Naive thymus-derived CD4-positive, alpha-beta T cell (primary cell): ENCODE measurements at regions of chr19 and their contacts with region 1.

Region 1: GRCh38 chr19:10251792-10252694 is at the start of gene MRPL4:
- DNase-seq: peak; percentile 82 to 98 (median 96)
- ATAC-seq: peak; percentile 98
- H3K4me3 ChIP-seq: peak within 1 kb of the TSS; percentile 90
- H3K4me3 Mint-ChIP-seq: peak within 1 kb of the TSS; percentile 93 to 100 (median 98)
- H3K27ac ChIP-seq: peak within 1 kb of the TSS; percentile 78
- H3K27ac Mint-ChIP-seq: peak within 1 kb of the TSS; percentile 92 to 99 (median 97)
- H3K4me1 ChIP-seq: peaks cover 6 to 12% of the 10 kb centered on the region in 2 donors
- H3K4me1 Mint-ChIP-seq: peaks cover 6 to 33% (median 24%) of the 10 kb centered on the region in 7 donors
- H3K27me3 ChIP-seq: no peaks in the 10 kb centered on the region
- H3K27me3 Mint-ChIP-seq: no peaks in the 10 kb centered on the region
- total RNA-seq, gene MRPL4: 36.8 to 70.5 (median 43.0) TPM

Region 2: GRCh38 chr19:9934132-9934950 is 317.7 kb before region 1 on chr19:
- CTCF ChIA-PET with region 1: interaction called, 5 read pairs
- POLR2A ChIA-PET with region 1: no interaction called
- intact Hi-C with region 1: loop called (anchors 1 to 2 kb)
- DNase-seq: peak; percentile 60 to 88 (median 73)
- ATAC-seq: peak; percentile 97
- H3K4me3 ChIP-seq: no peak overlapping the region
- H3K4me3 Mint-ChIP-seq: peak overlapping the region in 7 of 10 donors; percentile 28 to 84 (median 39)
- H3K27ac ChIP-seq: no peak overlapping the region
- H3K27ac Mint-ChIP-seq: peak overlapping the region in 1 of 9 donors; percentile 53
- H3K4me1 ChIP-seq: peaks cover 4 to 18% of the 10 kb centered on the region in 2 donors
- H3K4me1 Mint-ChIP-seq: peaks cover 17 to 33% (median 26%) of the 10 kb centered on the region in 7 donors
- H3K27me3 ChIP-seq: peaks cover 12 to 13% of the 10 kb centered on the region in 2 donors
- H3K27me3 Mint-ChIP-seq: peaks cover 45 to 67% (median 55%) of the 10 kb centered on the region in 5 donors

Region 3: DNA sequence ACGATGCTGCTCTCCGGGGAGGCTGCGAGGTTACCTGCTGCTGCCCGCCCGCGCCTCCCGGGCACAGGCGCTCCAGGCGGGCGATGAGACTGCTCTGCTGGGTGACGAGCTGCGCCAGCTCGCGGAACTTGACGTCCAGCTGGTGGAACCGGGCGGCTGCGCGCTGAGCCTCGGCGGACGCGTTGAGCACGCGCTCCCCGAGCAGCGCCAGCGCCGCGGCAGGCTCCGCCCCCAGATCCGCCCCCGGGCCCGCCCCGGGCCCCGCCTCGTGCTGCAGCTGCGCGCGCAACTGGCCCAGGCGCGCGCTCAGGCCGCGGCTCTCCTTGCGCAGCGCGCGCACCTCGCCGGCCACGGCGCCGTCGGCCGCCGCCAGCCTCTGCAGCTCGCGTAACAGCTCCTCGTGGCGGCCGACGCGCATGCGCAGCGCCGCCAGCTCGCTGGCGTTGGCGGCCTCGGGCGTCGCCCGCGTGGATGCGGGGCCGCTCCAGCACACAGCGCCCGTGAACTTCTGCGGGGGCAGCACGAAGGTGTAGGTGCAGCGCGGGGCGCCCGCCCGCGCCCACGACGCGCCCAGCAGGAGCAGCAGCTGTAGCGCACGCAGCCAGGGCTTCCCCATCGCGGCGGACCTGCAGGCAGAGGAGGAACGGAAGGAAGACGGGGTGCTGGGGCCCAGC is 156.0 kb before region 1 on chr19:
- CTCF ChIA-PET with region 1: interaction called, 4 read pairs
- POLR2A ChIA-PET with region 1: interaction called, 6 read pairs
- intact Hi-C with region 1: loop called in 1 of 2 experiments (anchors 1 kb)
- DNase-seq: peak; percentile 86 to 98 (median 92)
- ATAC-seq: peak; percentile 95
- H3K4me3 ChIP-seq: peak overlapping the region; percentile 48
- H3K4me3 Mint-ChIP-seq: peak overlapping the region; percentile 27 to 73 (median 60)
- H3K27ac ChIP-seq: peak overlapping the region; percentile 77
- H3K27ac Mint-ChIP-seq: peak overlapping the region in 8 of 9 donors; percentile 41 to 92 (median 74)
- H3K4me1 ChIP-seq: peaks cover 21 to 22% of the 10 kb centered on the region in 2 donors
- H3K4me1 Mint-ChIP-seq: peaks cover 0 to 35% (median 25%) of the 10 kb centered on the region in 7 donors
- H3K27me3 ChIP-seq: no peaks in the 10 kb centered on the region
- H3K27me3 Mint-ChIP-seq: no peaks in the 10 kb centered on the region

Region 4: DNA sequence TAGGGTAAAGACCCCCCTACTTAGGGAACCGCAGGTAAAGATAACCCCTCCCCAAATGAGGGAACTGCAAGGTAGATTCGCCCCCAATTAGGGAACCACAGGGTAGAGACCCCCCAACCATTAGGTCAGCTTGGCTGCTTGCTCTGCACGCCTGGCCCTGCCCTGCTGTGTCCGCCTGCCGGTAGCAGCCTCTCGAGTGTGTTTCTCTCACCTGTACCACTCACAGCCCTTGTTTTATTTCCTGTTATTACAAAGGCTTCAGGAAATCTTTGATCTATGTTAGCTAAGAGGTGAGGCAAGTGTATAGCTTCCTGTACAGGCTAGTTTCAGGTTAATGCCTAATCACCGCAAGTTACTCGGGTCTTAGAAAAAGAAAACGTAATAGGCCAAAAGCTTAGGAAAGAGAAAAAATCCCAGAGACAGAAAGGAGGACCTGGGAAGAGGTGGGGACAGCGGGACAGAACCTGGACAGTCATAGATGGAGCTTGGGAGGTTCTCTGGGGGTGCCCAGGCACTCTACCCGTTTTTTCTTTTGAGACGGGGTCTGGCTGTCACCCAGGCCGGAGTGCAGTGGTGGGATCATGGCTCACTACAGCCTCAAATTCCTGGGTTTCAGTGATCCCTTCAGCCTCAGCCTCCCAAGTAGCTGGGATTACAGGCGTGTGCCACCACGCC is 109.2 kb before region 1 on chr19:
- CTCF ChIA-PET with region 1: interaction called, 4 read pairs
- POLR2A ChIA-PET with region 1: no interaction called
- intact Hi-C with region 1: loop called in 1 of 2 experiments (anchors 1 kb)
- DNase-seq: peak in 7 of 9 donors; percentile 47 to 77 (median 67)
- ATAC-seq: peak; percentile 95
- H3K4me3 ChIP-seq: peak overlapping the region; percentile 16
- H3K4me3 Mint-ChIP-seq: peak overlapping the region; percentile 78 to 94 (median 86)
- H3K27ac ChIP-seq: peak overlapping the region; percentile 82
- H3K27ac Mint-ChIP-seq: peak overlapping the region; percentile 96 to 100 (median 99)
- H3K4me1 ChIP-seq: peaks cover 41 to 49% of the 10 kb centered on the region in 2 donors
- H3K4me1 Mint-ChIP-seq: peaks cover 5 to 58% (median 42%) of the 10 kb centered on the region in 7 donors
- H3K27me3 ChIP-seq: no peaks in the 10 kb centered on the region
- H3K27me3 Mint-ChIP-seq: no peaks in the 10 kb centered on the region

Region 5: GRCh38 chr19:10230861-10231611 is 21.0 kb before region 1 on chr19 and contains the start of gene S1PR2:
- CTCF ChIA-PET with region 1: interaction called, 52 read pairs
- POLR2A ChIA-PET with region 1: interaction called, 10 read pairs
- intact Hi-C with region 1: loop called (anchors 1 kb)
- DNase-seq: peak; percentile 47 to 79 (median 56)
- ATAC-seq: peak; percentile 60
- H3K4me3 ChIP-seq: peak within 1 kb of the TSS; percentile 81
- H3K4me3 Mint-ChIP-seq: peak within 1 kb of the TSS; percentile 79 to 94 (median 88)
- H3K27ac ChIP-seq: peak within 1 kb of the TSS; percentile 94
- H3K27ac Mint-ChIP-seq: peak within 1 kb of the TSS; percentile 80 to 89 (median 83)
- H3K4me1 ChIP-seq: peaks cover 16 to 17% of the 10 kb centered on the region in 2 donors
- H3K4me1 Mint-ChIP-seq: peaks cover 7 to 37% (median 24%) of the 10 kb centered on the region in 7 donors
- H3K27me3 ChIP-seq: no peaks in the 10 kb centered on the region
- H3K27me3 Mint-ChIP-seq: no peaks in the 10 kb centered on the region
- total RNA-seq, gene S1PR2: 3.4 to 6.8 (median 5.2) TPM

Region 6: DNA sequence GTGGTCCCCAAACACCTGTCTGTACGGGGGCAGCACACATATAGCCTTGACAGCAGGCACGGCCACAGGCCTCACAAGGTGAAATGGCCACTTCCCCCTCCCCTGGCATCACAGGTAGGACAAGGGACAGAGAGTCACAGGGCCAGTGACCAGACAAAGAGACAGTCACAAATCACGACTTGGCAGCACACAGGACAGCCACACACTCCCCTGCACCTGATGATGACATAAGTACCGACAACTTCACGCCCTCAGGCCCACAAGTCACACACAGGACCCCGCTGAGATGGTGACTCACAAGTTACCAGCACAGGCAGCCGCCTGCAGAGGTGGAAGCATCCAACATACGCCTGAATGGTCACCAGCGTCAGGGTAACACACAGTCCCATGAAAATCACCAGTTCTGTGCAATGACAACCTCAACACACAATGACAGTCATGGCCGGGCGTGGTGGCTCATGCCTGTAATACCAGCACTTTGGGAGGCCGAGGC is 111.8 kb after region 1 on chr19:
- CTCF ChIA-PET with region 1: no interaction called
- POLR2A ChIA-PET with region 1: no interaction called
- intact Hi-C with region 1: no loop called
- DNase-seq: no peak
- ATAC-seq: no peak
- H3K4me3 ChIP-seq: no peak overlapping the region
- H3K4me3 Mint-ChIP-seq: no peak overlapping the region
- H3K27ac ChIP-seq: no peak overlapping the region
- H3K27ac Mint-ChIP-seq: no peak overlapping the region
- H3K4me1 ChIP-seq: no peaks in the 10 kb centered on the region
- H3K4me1 Mint-ChIP-seq: peaks cover 0 to 3% (median 0%) of the 10 kb centered on the region in 7 donors
- H3K27me3 ChIP-seq: no peaks in the 10 kb centered on the region
- H3K27me3 Mint-ChIP-seq: no peaks in the 10 kb centered on the region

Region 7: DNA sequence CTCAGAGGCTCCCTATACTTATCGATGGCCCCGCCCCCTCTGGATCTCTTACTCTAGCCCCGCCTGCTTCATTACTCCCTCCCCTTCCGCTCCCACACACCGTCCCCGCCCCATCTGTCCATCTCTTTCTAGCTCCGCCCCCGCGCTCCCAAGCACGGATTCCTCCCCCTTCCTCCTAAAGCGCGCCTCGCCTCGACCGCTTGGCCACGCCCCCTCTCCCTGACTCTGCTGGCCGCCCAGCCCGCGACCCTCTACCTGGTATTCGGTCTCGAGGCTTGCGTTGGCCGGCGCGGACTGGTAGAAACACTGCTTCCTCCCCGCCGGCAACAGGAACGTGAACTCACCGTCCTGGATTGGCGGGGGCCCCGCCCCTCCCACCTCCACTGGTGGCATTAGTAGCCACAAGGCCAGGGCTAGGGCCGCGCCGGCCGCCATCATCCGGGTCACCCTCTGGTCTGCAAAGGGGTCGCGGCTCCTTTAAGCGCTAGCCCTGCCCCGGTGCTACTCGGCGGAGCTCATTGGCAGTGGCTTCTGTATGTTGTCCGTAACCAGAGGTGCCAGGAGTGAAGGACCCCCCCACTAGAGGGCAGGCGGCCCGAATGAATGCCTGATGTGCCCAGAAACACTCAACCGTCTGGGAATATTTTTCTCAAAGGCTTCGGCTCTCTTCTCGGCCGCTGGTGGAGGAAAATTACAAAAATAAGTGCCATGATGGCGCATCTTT is 583.9 kb after region 1 on chr19 and contains the start of gene TMED1:
- CTCF ChIA-PET with region 1: no interaction called
- POLR2A ChIA-PET with region 1: no interaction called
- intact Hi-C with region 1: loop called in 1 of 2 experiments (anchors 1 kb)
- DNase-seq: peak; percentile 81 to 97 (median 93)
- ATAC-seq: peak; percentile 92
- H3K4me3 ChIP-seq: peak within 1 kb of the TSS; percentile 98
- H3K4me3 Mint-ChIP-seq: peak within 1 kb of the TSS; percentile 82 to 99 (median 96)
- H3K27ac ChIP-seq: peak within 1 kb of the TSS; percentile 93
- H3K27ac Mint-ChIP-seq: peak within 1 kb of the TSS; percentile 98 to 100 (median 99)
- H3K4me1 ChIP-seq: peaks cover 8 to 13% of the 10 kb centered on the region in 2 donors
- H3K4me1 Mint-ChIP-seq: peaks cover 12 to 20% (median 15%) of the 10 kb centered on the region in 7 donors
- H3K27me3 ChIP-seq: no peaks in the 10 kb centered on the region
- H3K27me3 Mint-ChIP-seq: no peaks in the 10 kb centered on the region
- total RNA-seq, gene TMED1: 7.6 to 12.8 (median 9.9) TPM